Activated CD4-positive, alpha-beta memory T cell treated with anti-CD3 and anti-CD28 coated beads for 36 hours (primary cell): ENCODE measurements at regions of chr3 and their contacts with region 1.

Region 1: GRCh38 chr3:33372218-33373081 is 67.8 kb downstream of the UBP1 start:
- DNase-seq: peak; percentile 49
- H3K4me3 Mint-ChIP-seq: no peak overlapping the region
- H3K27ac Mint-ChIP-seq: no peak overlapping the region
- H3K4me1 Mint-ChIP-seq: peaks cover 7% of the 10 kb centered on the region
- H3K27me3 Mint-ChIP-seq: peaks cover 10% of the 10 kb centered on the region

Region 2: GRCh38 chr3:33131331-33132018 is 241.0 kb before region 1 on chr3:
- CTCF ChIA-PET with region 1: interaction called, 124 read pairs
- POLR2A ChIA-PET with region 1: interaction called, 4 read pairs
- intact Hi-C with region 1: loop called (anchors 1 kb)
- DNase-seq: peak; percentile 32
- H3K4me3 Mint-ChIP-seq: no peak overlapping the region
- H3K27ac Mint-ChIP-seq: no peak overlapping the region
- H3K4me1 Mint-ChIP-seq: peaks cover 9% of the 10 kb centered on the region
- H3K27me3 Mint-ChIP-seq: no peaks in the 10 kb centered on the region

Region 3: GRCh38 chr3:33331414-33331813 is 41.0 kb before region 1 on chr3:
- CTCF ChIA-PET with region 1: interaction called, 10 read pairs
- POLR2A ChIA-PET with region 1: no interaction called
- intact Hi-C with region 1: no loop called
- DNase-seq: no peak
- H3K4me3 Mint-ChIP-seq: no peak overlapping the region
- H3K27ac Mint-ChIP-seq: no peak overlapping the region
- H3K4me1 Mint-ChIP-seq: no peaks in the 10 kb centered on the region
- H3K27me3 Mint-ChIP-seq: peaks cover 4% of the 10 kb centered on the region

Region 4: DNA sequence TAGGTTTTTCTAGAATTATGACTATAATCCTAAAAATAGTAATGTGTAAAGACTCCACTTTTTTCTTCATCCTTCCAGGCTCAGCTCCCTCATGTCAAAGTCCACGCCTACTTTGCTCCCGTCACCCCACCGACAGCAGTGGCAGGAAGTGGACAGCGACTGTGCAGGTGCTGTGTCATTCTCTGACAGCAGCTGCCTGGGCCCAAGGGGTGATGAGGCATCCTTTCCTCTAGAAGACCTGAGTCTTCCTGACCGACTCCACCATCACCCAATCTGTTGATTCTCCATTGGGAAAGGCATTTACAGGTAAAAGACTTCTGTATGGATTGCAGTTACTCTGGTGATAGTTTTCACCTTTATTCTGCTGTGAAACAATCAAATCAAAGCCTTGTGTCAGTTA is 13.0 kb after region 1 on chr3:
- CTCF ChIA-PET with region 1: interaction called, 34 read pairs
- POLR2A ChIA-PET with region 1: no interaction called
- intact Hi-C with region 1: no loop called
- DNase-seq: peak; percentile 78
- H3K4me3 Mint-ChIP-seq: no peak overlapping the region
- H3K27ac Mint-ChIP-seq: peak overlapping the region; percentile 59
- H3K4me1 Mint-ChIP-seq: peaks cover 12% of the 10 kb centered on the region
- H3K27me3 Mint-ChIP-seq: no peaks in the 10 kb centered on the region

Region 5: DNA sequence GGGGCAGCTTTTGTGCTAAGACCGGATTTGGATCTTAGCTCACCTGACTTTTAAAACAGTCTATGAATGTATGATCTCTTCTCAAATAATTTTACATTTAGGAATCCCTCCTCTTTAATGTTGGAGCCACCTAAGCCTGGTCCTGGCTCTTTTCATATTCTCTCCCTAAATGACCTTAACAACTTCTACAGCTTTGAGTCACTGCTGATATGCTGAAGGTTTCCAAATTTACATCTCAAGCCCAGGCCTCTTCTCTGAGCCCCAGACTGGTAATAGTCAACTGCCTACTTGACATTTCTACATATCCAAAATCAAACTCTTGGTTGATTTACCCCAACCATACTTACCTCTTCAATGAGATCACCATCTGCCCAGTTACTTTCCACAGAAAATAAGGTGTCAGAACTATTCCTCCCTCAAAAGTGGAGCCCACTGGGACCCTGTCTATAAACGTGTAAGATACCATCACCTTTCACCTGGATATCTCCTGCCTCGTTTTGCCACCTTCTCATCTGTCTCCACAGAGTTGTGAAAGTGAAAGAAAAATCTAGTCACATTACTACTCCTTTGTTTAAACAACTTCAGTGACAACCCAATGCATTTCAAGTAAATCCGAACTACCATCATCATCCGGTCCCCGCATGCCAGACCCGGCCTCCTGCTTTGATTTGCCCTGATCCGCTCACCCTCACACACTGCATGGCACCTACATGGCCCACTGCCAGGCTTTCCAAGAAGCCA is 19.0 kb after region 1 on chr3:
- CTCF ChIA-PET with region 1: interaction called, 34 read pairs
- POLR2A ChIA-PET with region 1: no interaction called
- intact Hi-C with region 1: no loop called
- DNase-seq: peak; percentile 20
- H3K4me3 Mint-ChIP-seq: no peak overlapping the region
- H3K27ac Mint-ChIP-seq: peak overlapping the region; percentile 75
- H3K4me1 Mint-ChIP-seq: peaks cover 19% of the 10 kb centered on the region
- H3K27me3 Mint-ChIP-seq: no peaks in the 10 kb centered on the region

Region 6: GRCh38 chr3:33401781-33402180 is 29.3 kb after region 1 on chr3:
- CTCF ChIA-PET with region 1: interaction called, 15 read pairs
- POLR2A ChIA-PET with region 1: no interaction called
- intact Hi-C with region 1: no loop called
- DNase-seq: no peak
- H3K4me3 Mint-ChIP-seq: no peak overlapping the region
- H3K27ac Mint-ChIP-seq: no peak overlapping the region
- H3K4me1 Mint-ChIP-seq: no peaks in the 10 kb centered on the region
- H3K27me3 Mint-ChIP-seq: no peaks in the 10 kb centered on the region

Region 7: DNA sequence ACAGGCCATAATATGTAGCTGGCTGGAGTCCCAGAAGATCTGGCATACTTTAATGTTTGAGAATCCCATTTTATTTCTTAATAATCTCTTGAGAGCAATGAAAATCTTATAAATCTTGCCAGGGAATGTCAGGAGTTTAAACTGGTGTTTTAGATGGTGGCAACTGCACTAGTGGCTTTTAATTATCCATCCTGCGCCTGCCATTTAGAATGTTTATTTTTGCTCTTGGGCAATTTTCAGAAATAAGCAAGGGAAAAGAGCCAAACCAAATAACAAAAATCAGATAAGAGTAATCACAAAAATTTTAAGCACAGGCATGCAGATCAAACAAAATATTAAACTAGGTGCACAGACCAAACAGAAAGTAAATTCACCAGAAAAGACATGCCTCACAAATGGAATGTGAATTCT is 109.7 kb after region 1 on chr3:
- CTCF ChIA-PET with region 1: no interaction called
- POLR2A ChIA-PET with region 1: no interaction called
- intact Hi-C with region 1: no loop called
- DNase-seq: no peak
- H3K4me3 Mint-ChIP-seq: no peak overlapping the region
- H3K27ac Mint-ChIP-seq: no peak overlapping the region
- H3K4me1 Mint-ChIP-seq: no peaks in the 10 kb centered on the region
- H3K27me3 Mint-ChIP-seq: no peaks in the 10 kb centered on the region

Region 8: DNA sequence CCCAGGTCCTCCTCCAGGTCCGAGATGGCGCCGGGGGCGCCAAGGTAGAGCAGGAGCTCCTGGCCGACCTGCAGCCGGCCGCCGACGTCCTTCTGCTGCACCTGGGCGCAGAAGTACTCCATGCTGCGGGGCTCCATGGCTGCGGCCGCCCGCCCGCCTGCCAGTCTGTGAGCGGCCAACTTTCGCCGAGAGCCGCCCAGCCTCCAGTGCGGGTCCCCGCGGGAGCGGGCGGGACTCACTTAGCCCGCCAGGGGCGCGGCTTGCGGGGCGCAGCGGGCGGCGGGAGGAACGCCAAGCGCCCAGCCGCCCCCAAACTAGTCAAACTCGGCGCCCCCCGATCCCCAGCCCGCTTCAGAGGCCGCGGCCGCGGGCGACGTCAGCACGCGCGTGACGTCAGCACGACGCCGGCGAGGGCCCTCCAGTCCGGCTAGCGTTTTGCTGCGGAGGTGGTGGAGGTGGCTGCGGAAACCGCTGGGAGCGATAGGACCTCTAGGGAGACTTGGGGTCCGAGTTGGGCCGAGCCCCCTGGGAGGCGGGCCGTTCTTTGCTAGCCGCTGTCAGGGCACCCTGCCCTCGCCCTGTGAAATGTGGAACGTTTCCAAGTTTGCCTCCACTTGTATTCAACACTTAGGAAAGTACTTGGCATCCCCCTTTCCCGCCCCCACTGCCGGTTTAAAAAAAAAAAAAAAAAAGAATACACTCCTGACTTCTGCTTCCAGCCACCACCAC is 345.6 kb after region 1 on chr3 and contains the start of gene CLASP2:
- CTCF ChIA-PET with region 1: interaction called, 4 read pairs
- POLR2A ChIA-PET with region 1: no interaction called
- intact Hi-C with region 1: loop called (anchors 5 kb)
- DNase-seq: peak; percentile 89
- H3K4me3 Mint-ChIP-seq: peak within 1 kb of the TSS; percentile 85
- H3K27ac Mint-ChIP-seq: peak within 1 kb of the TSS; percentile 90
- H3K4me1 Mint-ChIP-seq: peaks cover 9% of the 10 kb centered on the region
- H3K27me3 Mint-ChIP-seq: no peaks in the 10 kb centered on the region
- total RNA-seq, gene CLASP2: 41.8 to 46.6 TPM